ENCODE measurements at regions of chr11 and their contacts with region 1.

Region 1: GRCh38 chr11:19101796-19102520 is 15.0 kb upstream of the ZDHHC13 start:
- DNase-seq: no peak
- ATAC-seq: no peak
- H3K4me3 ChIP-seq: no peak overlapping the region
- H3K4me3 Mint-ChIP-seq: no peak overlapping the region
- H3K27ac ChIP-seq: no peak overlapping the region
- H3K27ac Mint-ChIP-seq: no peak overlapping the region
- H3K4me1 ChIP-seq: no peaks in the 10 kb centered on the region
- H3K4me1 Mint-ChIP-seq: no peaks in the 10 kb centered on the region
- H3K27me3 ChIP-seq: no peaks in the 10 kb centered on the region
- H3K27me3 Mint-ChIP-seq: peaks cover 18 to 24% of the 10 kb centered on the region in 2 donors

Region 2: DNA sequence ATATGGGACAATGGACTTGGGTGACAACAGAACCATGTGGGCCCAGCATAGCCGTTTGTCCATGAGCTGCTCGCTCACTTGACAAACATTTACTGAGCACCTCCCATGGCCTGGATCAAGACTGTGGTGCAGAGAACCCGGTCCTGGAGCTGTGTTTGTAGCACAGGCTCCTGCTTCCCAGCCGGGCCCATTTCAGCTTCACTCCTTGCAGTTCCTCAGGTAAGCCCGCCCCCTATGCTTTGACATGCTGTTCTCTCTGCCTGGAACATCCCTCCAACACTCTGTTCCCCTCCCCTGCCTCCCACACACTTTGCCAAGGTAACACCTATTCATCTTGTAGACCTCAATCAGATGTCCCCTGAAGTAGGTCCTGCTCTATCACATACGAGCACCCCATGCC is 356.7 kb before region 1 on chr11:
- CTCF ChIA-PET with region 1: interaction called in 1 of 2 experiments, 11 read pairs
- POLR2A ChIA-PET with region 1: no interaction called
- DNase-seq: no peak
- ATAC-seq: no peak
- H3K4me3 ChIP-seq: no peak overlapping the region
- H3K4me3 Mint-ChIP-seq: no peak overlapping the region
- H3K27ac ChIP-seq: no peak overlapping the region
- H3K27ac Mint-ChIP-seq: no peak overlapping the region
- H3K4me1 ChIP-seq: no peaks in the 10 kb centered on the region
- H3K4me1 Mint-ChIP-seq: no peaks in the 10 kb centered on the region
- H3K27me3 ChIP-seq: peaks cover 0 to 22% of the 10 kb centered on the region in 2 experiments
- H3K27me3 Mint-ChIP-seq: peaks cover 0 to 3% of the 10 kb centered on the region in 2 donors

Region 3: GRCh38 chr11:19055016-19055415 is 46.9 kb before region 1 on chr11:
- CTCF ChIA-PET with region 1: no interaction called
- POLR2A ChIA-PET with region 1: no interaction called
- DNase-seq: no peak
- ATAC-seq: no peak
- H3K4me3 ChIP-seq: no peak overlapping the region
- H3K4me3 Mint-ChIP-seq: no peak overlapping the region
- H3K27ac ChIP-seq: no peak overlapping the region
- H3K27ac Mint-ChIP-seq: no peak overlapping the region
- H3K4me1 ChIP-seq: no peaks in the 10 kb centered on the region
- H3K4me1 Mint-ChIP-seq: peaks cover 0 to 5% (median 5%) of the 10 kb centered on the region in 3 donors
- H3K27me3 ChIP-seq: no peaks in the 10 kb centered on the region
- H3K27me3 Mint-ChIP-seq: peaks cover 3 to 13% of the 10 kb centered on the region in 2 donors

Region 4: DNA sequence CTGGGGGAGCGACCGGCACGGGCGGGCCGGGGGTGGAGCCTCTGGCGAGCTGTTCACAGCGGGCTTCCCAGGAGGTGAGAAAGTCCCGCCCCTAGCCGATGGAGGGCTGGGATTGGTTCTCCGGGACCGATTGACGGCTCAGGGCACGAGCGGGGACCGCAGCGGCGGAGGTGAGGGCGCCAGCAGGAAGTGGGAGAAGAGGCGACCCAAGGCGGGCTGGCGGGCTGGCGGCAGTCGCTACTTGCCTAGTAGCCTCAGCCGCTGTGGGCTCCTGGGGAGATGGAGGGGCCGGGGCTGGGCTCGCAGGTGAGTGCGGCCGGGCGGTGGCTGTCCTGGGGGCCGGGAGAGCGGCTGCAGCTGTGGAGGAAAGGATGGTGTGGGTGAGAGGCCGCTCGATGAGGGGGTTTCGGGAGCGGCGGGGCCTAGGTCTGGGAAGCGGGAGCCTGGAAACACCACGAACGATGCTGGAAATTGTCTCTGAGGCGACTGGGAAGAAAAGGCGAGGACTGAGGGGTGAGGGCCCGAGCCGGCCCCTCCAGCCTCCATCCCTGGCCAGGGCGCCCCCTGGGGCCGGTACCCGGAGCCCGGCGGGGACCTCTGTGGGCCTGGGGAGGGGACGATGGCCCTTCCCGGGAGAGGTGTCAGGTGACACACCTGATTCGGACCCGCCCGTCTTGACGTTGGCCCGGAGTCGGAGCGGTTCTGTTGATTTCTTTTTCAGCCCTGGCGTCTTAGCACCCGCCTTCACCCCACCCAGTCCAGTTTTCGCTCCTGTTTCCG is 15.2 kb after region 1 on chr11 and contains the start of gene ZDHHC13:
- CTCF ChIA-PET with region 1: no interaction called
- POLR2A ChIA-PET with region 1: no interaction called
- DNase-seq: peak; percentile 88 to 96 (median 92)
- ATAC-seq: peak; percentile 99 to 100 (median 99)
- H3K4me3 ChIP-seq: peak within 1 kb of the TSS; percentile 79 to 97
- H3K4me3 Mint-ChIP-seq: peak within 1 kb of the TSS; percentile 91 to 93 (median 93)
- H3K27ac ChIP-seq: peak within 1 kb of the TSS; percentile 43
- H3K27ac Mint-ChIP-seq: peak within 1 kb of the TSS; percentile 59 to 80
- H3K4me1 ChIP-seq: peaks cover 7 to 21% of the 10 kb centered on the region in 2 experiments
- H3K4me1 Mint-ChIP-seq: peaks cover 52 to 57% (median 53%) of the 10 kb centered on the region in 3 donors
- H3K27me3 ChIP-seq: peaks cover 0 to 2% of the 10 kb centered on the region in 2 experiments
- H3K27me3 Mint-ChIP-seq: no peaks in the 10 kb centered on the region
- total RNA-seq, gene ZDHHC13: 10.2 to 16.3 (median 13.4) TPM

Measured in T-cell (primary cell).